ENCODE measurements at regions of chrX and their contacts with region 1.

Region 1: GRCh38 chrX:46366381-46367207 is 178.6 kb downstream of the ZNF674 start:
- DNase-seq: no peak
- H3K4me3 ChIP-seq: no peak overlapping the region
- H3K27ac ChIP-seq: no peak overlapping the region
- H3K4me1 ChIP-seq: no peaks in the 10 kb centered on the region
- H3K27me3 ChIP-seq: no peaks in the 10 kb centered on the region

Region 2: DNA sequence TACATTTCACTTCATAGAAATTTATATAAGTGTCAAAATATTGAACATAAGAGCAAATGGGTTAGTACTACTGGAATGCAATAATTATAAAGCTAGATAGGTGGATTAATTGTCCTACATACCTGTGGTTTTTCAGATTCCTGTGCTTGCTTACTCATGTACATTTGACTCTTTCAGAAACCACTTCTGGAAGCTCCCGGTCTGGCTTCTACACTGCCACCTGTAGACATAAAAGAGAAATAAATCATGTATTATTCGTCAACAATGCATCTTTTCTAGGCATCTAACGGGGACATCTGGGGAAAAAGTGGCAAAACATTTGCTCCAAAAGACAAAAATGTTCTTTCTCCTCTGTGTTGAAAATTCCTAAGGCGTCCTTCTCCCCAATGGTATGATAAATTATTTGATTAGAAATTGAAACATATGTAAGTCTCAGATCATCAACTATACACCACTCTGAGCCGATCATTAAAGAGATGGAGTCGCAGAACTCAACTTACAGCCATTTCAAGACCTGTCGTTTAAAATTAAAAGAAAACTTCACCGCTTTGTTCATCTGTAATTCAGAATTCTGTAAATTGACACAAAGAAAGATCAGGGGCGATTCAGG is 517.2 kb before region 1 on chrX:
- in situ Hi-C with region 1: loop called (anchors 25 kb)
- DNase-seq: peak; percentile 80
- H3K4me3 ChIP-seq: peak overlapping the region; percentile 94
- H3K27ac ChIP-seq: no peak overlapping the region
- H3K4me1 ChIP-seq: peaks cover 16% of the 10 kb centered on the region
- H3K27me3 ChIP-seq: no peaks in the 10 kb centered on the region

Measured in GM23248 (cell line).